Activated naive CD4-positive, alpha-beta T cell treated with anti-CD3 and anti-CD28 coated beads for 36 hours (primary cell): ENCODE measurements at regions of chr2 and their contacts with region 1.

Region 1: GRCh38 chr2:233426619-233427342 is 72.5 kb downstream of the DGKD start:
- DNase-seq: peak; percentile 85
- H3K4me3 Mint-ChIP-seq: no peak overlapping the region
- H3K27ac Mint-ChIP-seq: peak overlapping the region; percentile 7
- H3K4me1 Mint-ChIP-seq: peaks cover 83% of the 10 kb centered on the region
- H3K27me3 Mint-ChIP-seq: no peaks in the 10 kb centered on the region

Region 2: GRCh38 chr2:233413559-233414272 is 13.1 kb before region 1 on chr2:
- CTCF ChIA-PET with region 1: interaction called, 7 read pairs
- intact Hi-C with region 1: loop called (anchors 1 kb)
- DNase-seq: peak; percentile 69
- H3K4me3 Mint-ChIP-seq: no peak overlapping the region
- H3K27ac Mint-ChIP-seq: peak overlapping the region; percentile 87
- H3K4me1 Mint-ChIP-seq: peaks cover 89% of the 10 kb centered on the region
- H3K27me3 Mint-ChIP-seq: no peaks in the 10 kb centered on the region

Region 3: DNA sequence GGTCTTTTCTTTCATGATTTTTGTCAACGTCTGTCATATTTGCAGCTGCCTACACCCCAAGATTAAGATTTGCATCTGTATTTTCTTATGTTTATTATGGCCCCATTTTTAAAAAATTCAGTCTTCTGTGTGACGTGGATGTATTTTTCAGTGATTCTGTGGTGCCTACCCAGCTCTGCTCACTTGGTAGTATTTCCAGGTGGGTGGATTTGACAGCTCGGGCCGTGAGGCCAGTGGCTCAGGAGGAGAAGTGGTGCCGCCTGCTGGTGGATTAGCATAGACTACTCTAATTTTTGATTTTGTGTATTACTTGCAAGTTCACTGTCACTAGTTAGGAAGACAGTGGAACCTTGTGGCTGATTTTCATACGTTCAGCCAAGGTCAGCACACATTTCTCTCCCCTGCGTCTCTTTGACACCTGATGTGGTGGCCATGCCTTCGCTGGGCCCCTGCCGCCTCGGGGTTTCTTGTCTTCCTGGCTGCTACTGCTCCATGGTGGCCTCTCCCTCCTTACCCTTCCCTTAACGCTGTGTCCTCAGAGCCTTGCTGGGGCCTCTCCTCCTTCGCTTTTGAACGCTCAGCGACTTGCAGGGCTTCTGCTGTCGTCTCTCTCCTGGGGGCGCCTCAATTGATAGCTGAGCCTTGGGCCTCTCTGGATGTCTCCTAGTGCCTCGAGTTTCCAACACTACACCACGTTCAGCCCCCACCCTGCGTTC is 16.8 kb after region 1 on chr2:
- CTCF ChIA-PET with region 1: interaction called, 14 read pairs
- intact Hi-C with region 1: no loop called
- DNase-seq: peak; percentile 91
- H3K4me3 Mint-ChIP-seq: no peak overlapping the region
- H3K27ac Mint-ChIP-seq: peak overlapping the region; percentile 30
- H3K4me1 Mint-ChIP-seq: peaks cover 16% of the 10 kb centered on the region
- H3K27me3 Mint-ChIP-seq: no peaks in the 10 kb centered on the region